Thyroid gland (tissue), 4 donors: ENCODE measurements at regions of chr7 and their contacts with region 1.

Region 1: DNA sequence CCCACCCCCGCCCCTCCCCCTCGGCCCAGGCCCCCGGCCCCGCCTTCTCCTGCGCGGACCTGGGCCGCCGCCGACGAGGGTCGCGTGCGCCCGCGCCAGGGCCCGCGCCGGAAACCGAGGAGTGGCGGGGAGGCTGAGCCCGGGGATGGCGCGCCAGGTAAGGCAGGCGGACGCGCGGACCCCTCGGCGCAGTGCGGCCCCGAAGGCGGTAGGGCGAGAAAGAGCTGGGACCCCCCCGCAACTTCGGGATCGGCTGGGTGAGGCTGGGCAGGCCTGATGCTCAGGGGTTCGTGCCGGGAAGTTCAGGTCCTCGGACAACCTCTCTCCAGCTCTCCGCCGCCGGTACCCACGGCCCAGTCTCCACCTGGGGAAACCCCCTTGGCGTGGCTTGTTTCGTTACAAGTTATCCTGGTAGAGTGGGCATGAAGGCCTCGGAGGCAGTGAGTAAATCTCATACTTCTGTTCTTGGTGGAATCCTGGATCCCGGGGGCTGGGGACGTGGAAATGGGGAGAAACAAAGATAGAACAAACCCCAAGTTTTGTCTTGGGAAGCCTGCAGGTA is 58.4 kb downstream of the ZNF467 start:
- DNase-seq: peak; percentile 29 to 47
- H3K4me3 ChIP-seq: peak overlapping the region; percentile 10 to 68 (median 64)
- H3K27ac ChIP-seq: peak overlapping the region in 2 of 3 donors; percentile 17 to 66
- H3K4me1 ChIP-seq: peaks cover 15 to 22% of the 10 kb centered on the region in 2 donors
- H3K27me3 ChIP-seq: no peaks in the 10 kb centered on the region
- CTCF ChIP-seq: no peak
- POLR2A ChIP-seq: peak in 1 of 2 donors; percentile 19

Region 2: DNA sequence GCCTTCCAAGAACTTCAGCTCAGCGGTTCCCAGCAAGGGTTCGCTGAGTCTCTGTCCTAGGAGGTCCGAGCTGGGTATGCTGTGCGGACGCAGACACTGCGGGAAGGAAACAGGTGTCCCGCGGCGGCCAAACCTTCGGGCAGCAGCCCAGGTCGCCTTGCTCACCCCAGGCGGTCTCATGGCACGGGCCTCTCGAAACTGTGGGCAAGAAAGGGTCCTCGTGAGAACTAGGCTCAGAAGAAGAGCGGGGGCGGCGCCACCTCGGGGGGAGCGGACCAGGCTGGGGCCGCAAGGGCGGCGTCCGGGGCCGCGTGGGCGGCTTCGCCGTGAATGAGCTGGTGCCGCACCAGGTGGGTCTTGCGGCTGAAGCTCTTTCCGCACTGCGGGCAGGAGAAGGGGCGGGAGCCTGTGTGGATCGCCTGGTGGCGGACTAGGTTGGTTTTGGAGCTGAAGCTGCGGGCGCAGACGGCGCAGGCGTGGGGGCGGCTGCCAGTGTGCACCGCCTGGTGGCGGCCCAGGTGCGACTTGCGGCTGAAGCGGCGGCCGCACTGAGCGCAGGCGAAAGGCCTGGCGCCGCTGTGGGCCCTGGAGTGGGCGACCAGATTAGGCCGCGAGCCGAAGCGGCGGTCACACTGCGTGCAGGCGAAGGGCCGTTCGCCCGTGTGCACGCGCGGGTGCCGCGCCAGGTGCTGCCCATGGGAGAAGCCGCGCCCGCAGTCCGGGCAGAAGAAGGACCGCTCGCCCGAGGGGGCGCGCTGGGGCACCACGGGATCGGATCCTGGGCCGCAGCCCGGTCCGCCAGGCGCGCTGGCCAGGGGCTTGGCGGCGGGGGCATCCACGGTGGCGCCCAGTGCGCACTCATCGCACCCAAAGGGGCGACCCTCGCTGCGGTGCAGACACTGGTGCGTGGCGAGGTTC is 49.7 kb after region 1 on chr7:
- intact Hi-C with region 1: loop called (anchors 5 kb)
- DNase-seq: no peak
- H3K4me3 ChIP-seq: no peak overlapping the region
- H3K27ac ChIP-seq: no peak overlapping the region
- H3K4me1 ChIP-seq: no peaks in the 10 kb centered on the region
- H3K27me3 ChIP-seq: no peaks in the 10 kb centered on the region
- CTCF ChIP-seq: no peak
- POLR2A ChIP-seq: no peak